Right lobe of liver (tissue), 6 donors: ENCODE measurements at regions of chr12 and their contacts with region 1.

Region 1: DNA sequence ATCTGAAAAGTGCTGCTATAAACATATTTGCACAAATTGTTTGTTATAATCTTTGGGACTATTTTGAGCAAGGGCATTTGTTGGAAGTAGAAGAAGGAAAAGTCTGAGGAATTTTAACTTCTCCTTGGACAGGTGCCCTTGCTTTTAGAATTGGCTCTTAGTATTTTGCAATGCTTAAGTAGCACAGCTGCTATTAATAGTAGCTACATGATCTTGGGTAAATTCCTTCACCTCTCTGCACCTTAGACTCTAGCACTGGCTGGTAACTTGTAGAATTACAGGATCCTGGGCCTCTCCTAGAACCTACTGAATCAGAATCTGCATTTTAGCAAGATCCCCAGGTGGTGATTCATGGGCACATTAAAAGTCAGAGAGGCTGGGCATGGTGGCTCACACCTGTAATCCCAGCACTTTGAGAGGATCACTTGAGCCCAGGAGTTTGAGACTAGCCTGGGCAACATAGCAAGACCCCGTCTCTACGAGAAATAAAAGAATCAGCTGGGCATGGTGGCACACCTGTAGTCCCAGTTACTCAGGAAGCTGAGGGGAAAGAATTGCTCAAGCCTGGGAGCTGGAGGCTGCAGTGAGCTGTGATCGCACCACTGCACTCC is 10.8 kb upstream of the TMEM120B start:
- DNase-seq: no peak
- ATAC-seq: no peak
- H3K4me3 ChIP-seq: no peak overlapping the region
- H3K27ac ChIP-seq: no peak overlapping the region
- H3K4me1 ChIP-seq: no peaks in the 10 kb centered on the region
- H3K27me3 ChIP-seq: no peaks in the 10 kb centered on the region
- CTCF ChIP-seq: no peak
- POLR2A ChIP-seq: no peak

Region 2: GRCh38 chr12:121637231-121637914 is 64.4 kb before region 1 on chr12:
- intact Hi-C with region 1: no loop called
- DNase-seq: peak in 2 of 3 donors; percentile 33 to 66
- ATAC-seq: peak; percentile 44 to 61 (median 46)
- H3K4me3 ChIP-seq: no peak overlapping the region
- H3K27ac ChIP-seq: no peak overlapping the region
- H3K4me1 ChIP-seq: peaks cover 0 to 18% (median 8%) of the 10 kb centered on the region in 4 donors
- H3K27me3 ChIP-seq: no peaks in the 10 kb centered on the region
- CTCF ChIP-seq: no peak
- POLR2A ChIP-seq: no peak

Region 3: DNA sequence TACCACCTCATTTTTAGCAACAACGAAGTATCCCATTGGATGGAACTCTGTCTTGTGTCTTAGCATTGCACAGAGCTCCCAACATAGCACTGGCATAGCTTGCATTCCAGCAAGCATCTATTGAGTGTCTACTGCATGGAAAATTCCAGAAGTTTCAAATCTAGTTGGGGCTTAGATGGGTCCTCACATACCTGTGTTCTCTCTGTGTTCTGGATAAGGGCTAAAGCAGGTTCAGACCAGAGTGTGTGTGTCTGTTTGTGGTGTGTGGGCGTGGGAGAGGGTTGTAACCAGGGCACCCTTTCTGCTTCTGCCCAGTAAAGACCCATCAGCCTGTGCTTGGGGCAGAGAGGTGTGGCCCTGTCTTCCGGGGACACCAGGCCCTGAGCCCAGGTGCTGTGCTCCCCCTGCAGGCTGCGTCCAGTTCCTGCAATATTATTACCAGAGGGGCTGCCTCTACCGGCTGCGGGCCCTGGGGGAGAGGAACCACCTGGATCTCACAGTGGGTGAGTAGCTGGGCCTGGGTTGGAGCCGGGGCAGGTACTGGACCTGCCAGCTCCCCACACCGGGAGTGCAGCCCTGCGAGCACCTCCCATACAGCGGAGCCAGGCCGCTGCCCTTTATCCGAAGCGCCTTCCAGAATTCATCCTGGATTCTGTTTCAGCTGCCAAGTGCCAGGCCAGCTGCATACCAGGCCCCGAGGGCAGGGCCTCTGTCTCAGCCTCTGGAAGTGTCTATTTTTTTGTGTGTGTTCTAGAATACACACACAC is 71.4 kb after region 1 on chr12:
- intact Hi-C with region 1: loop called (anchors 5 kb)
- DNase-seq: peak; percentile 79 to 82 (median 82)
- ATAC-seq: peak; percentile 91 to 95 (median 92)
- H3K4me3 ChIP-seq: no peak overlapping the region
- H3K27ac ChIP-seq: no peak overlapping the region
- H3K4me1 ChIP-seq: peaks cover 0 to 9% (median 4%) of the 10 kb centered on the region in 4 donors
- H3K27me3 ChIP-seq: no peaks in the 10 kb centered on the region
- CTCF ChIP-seq: peak; percentile 79 to 95 (median 86)
- POLR2A ChIP-seq: no peak

Region 4: DNA sequence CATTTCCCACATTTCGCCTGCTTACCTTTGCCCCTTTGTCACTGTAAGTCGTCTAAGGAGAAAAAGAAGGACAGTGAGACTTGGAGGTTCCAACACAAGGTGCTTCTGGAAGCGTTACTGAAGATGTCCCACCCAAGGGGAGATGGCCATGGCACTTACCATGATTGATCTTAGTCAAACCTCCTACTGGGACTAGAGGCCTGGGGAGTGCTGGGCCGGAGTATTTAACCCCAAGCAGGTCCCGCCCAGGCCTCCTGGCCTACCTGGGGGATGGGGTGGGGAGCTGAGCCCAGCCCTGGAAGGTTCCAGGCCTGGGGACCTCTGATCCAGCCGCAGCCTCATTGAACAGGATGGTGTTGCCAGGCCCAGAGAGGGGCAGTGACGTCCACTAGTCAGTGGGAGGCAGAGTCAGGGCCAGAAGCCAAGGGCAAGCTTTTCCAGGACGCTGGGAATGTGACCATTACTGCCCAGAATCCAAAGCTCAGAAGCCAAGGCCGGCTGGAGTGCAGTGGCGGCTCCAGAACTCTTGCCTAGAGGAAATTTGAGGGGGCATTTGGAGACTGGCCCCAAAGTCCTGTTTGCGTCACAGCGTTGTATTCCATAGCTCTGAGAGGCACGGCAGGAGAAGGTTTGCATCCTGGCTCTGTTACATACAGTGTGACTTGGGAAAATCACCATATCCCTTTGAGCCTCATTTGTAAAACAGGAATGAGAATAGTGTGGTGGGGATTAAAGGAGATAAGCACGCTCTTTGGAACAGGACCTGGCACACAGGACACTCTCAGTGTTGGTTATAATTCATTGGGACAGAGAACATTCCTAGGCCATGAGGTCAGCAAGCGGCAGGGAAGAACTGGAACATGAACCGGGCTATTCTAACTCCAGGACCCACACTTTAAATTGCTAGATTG is 157.1 kb after region 1 on chr12 and contains the start of gene HPD:
- intact Hi-C with region 1: no loop called
- DNase-seq: peak; percentile 91 to 98 (median 97)
- ATAC-seq: peak; percentile 79 to 88 (median 84)
- H3K4me3 ChIP-seq: peak within 1 kb of the TSS; percentile 39 to 62 (median 61)
- H3K27ac ChIP-seq: peak within 1 kb of the TSS; percentile 89 to 98 (median 91)
- H3K4me1 ChIP-seq: peaks cover 0 to 52% (median 12%) of the 10 kb centered on the region in 4 donors
- H3K27me3 ChIP-seq: no peaks in the 10 kb centered on the region
- CTCF ChIP-seq: peak in 1 of 4 donors; percentile 7
- POLR2A ChIP-seq: peak; percentile 69
- total RNA-seq, gene HPD: 649 to 1,803 (median 1,080) TPM